ENCODE measurements at regions of chr5 and their contacts with region 1.

Region 1: DNA sequence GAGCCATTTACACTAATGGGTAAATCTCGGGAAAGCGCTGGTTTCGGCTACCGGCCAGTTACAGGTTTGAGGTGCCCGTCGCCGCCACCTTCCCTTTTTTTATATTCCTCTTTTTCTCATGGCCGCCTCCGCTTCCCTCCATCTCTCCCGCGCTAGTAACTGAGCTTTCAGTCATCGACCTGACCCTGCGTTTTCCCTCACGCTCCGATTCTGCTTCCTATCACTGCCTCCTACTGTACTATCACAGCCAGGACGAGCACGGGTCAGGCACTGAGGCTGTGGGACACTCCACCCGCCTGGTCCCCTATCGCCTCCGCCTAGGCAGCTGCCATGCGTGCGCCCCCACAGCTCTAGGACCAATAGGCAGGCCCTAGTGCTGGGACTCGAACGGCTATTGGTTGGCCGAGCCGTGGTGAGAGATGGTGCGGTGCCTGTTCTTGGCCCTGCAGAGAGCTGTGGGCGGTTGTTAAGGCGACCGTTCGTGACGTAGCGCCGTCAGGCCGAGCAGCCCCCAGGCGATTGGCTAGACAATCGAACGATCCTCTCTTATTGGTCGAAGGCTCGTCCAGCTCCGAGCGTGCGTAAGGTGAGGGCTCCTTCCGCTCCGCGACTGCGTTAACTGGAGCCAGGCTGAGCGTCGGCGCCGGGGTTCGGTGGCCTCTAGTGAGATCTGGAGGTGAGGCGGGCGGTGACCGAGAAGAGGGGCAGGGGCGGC is at the start of gene HMGCR:
- DNase-seq: peak; percentile 98 to 99
- H3K4me3 ChIP-seq: peak within 1 kb of the TSS; percentile 69 to 78
- H3K27ac ChIP-seq: peak within 1 kb of the TSS; percentile 75 to 87
- H3K4me1 ChIP-seq: peaks cover 0 to 2% of the 10 kb centered on the region in 2 donors
- H3K27me3 ChIP-seq: no peaks in the 10 kb centered on the region
- CTCF ChIP-seq: peak in 1 of 3 experiments; percentile 7
- total RNA-seq, gene HMGCR: 4.9 TPM

Region 2: DNA sequence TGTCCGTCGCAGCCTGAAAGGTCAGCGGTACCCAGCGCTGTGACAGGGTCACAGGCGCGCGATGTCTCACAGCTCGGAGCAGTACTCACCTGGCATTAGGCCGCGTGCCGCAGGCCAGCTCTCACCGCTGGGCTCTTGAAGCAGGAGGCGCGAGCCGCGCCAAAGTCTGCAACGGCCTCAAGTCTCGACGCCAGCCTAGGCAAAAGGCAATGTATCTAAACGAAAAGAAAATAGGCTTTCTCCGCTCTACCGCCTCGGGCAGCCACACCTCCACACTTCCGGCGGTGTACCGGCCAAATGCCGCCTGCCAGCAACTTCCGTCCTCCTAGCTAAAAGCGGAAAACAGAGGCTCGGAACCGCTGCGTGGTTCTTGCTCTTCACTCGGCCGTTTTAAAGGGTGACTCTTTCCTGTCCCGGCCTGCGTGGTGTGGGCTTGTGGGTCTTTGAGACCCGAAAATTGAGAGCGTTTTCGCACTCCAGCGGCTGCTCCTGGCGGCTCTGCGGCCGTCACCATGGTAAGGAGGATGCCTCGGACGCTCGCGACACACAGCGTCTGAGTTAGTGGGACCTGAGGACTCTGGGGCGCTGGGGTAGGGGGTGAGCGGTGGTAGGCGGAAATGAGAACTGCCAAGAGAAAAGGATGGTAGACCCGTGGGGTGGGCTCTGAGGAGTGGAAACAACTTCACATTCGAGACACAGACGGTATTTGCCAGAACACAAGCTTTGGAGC is 569.8 kb before region 1 on chr5 and contains the starts of genes GFM2 and NSA2:
- intact Hi-C with region 1: loop called (anchors 5 kb)
- DNase-seq: peak; percentile 50 to 94
- H3K4me3 ChIP-seq: peak within 1 kb of the TSS; percentile 88 to 96
- H3K27ac ChIP-seq: peak within 1 kb of the TSS; percentile 80 to 91
- H3K4me1 ChIP-seq: peaks cover 7 to 20% of the 10 kb centered on the region in 2 donors
- H3K27me3 ChIP-seq: no peaks in the 10 kb centered on the region
- CTCF ChIP-seq: no peak
- total RNA-seq, gene GFM2: 12.7 TPM
- total RNA-seq, gene NSA2: 103 TPM

Region 3: DNA sequence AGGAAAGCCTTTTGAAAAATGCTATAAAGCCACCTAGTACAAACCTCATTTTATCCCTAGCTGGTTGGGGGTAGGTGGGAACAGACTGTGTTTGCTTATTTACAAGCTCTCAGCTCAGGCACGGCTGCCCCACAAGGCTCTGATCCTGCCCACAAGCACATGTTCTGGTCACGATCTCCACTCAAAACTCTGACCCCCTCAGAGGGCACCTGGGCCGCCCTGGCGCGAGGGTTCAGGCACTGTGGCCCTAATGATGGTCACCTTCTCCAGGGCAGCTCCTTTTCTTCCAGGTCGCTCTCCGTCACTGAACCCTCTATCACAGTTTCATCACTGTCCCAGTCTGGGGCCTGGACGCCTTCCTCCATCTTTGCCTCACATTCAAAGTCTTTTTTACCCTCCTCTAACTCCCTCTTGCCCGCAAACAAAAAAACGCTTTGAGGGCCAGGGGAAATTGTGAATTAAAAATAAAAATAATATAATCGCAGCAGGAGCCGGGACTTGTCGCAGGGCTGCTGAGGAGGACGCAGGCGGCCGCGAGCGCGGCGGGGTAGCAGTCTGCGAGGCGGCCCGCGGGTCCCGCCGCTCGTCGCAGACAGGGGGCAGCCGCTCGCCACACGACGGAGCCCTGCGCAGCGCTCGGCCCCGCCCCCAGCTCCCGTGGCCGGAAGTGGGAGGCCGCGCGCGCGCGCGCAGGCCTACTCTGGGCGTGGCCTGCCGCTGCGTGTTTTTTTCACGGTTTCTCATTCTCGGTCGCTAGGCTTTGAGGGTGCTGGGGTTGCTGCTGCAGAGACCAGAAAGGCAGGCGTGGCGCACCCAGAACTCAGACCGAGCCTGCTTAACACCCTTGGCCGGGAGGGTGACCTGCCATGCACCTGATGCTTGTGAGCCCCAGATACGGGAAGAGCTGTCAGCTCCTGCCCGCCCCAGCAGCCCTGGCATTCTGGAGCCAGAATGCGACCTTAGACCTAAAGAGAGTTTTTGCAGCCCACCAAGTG is 100.2 kb before region 1 on chr5 and contains the start of gene ANKRD31:
- intact Hi-C with region 1: loop called (anchors 1 kb)
- DNase-seq: peak; percentile 30 to 89
- H3K4me3 ChIP-seq: peak within 1 kb of the TSS; percentile 61 to 91
- H3K27ac ChIP-seq: peak within 1 kb of the TSS; percentile 75 to 76
- H3K4me1 ChIP-seq: no peaks in the 10 kb centered on the region
- H3K27me3 ChIP-seq: no peaks in the 10 kb centered on the region
- CTCF ChIP-seq: peak; percentile 59 to 92 (median 65)
- total RNA-seq, gene ANKRD31: not detected

Region 4: DNA sequence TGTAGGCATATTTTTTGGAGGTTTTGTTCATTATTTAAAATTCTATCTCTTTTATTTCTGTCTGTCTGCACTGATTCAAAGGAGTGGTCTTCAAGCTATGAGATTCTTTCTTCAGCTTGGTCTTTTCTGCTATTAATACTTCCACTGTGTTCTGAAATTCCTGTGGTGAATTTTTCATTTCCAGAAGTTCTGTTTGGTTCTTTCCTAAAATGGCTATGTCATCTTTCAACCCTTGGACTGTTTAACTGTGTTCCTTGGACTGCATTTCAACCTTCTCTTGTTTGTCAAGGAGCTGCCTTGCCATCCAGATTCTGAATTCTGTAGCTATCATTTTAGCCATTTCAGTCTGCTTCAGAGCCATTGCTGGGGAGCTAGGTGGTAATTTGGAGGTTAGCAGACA is 98.3 kb after region 1 on chr5:
- intact Hi-C with region 1: no loop called
- DNase-seq: no peak
- H3K4me3 ChIP-seq: no peak overlapping the region
- H3K27ac ChIP-seq: no peak overlapping the region
- H3K4me1 ChIP-seq: no peaks in the 10 kb centered on the region
- H3K27me3 ChIP-seq: no peaks in the 10 kb centered on the region
- CTCF ChIP-seq: no peak

Region 5: DNA sequence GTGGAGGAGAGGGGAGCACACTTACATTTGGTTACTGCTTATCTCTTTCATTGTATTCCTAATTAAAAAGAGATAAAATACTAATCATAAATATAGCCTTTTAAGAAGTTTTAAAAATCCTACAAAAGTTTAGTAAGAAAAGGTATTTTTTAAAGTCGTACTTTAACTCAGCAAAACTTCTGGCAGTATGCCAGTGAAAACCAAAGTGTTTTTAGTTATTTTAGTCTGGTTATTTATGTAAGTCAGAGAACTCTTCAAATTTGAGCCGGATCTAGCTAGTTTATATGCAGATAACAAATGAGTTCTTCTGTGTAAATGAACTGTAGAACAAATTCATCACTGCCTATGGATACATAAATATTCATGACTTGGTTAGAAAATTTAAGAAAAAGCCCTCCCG is 238.0 kb after region 1 on chr5:
- intact Hi-C with region 1: loop called (anchors 5 kb)
- DNase-seq: no peak
- H3K4me3 ChIP-seq: peak overlapping the region in 1 of 2 donors; percentile 16
- H3K27ac ChIP-seq: peak overlapping the region; percentile 53 to 60
- H3K4me1 ChIP-seq: peaks cover 3 to 27% of the 10 kb centered on the region in 2 donors
- H3K27me3 ChIP-seq: no peaks in the 10 kb centered on the region
- CTCF ChIP-seq: no peak

Region 6: GRCh38 chr5:75717082-75717922 is 380.5 kb after region 1 on chr5 and contains the start of gene POC5:
- intact Hi-C with region 1: loop called (anchors 1 kb)
- DNase-seq: peak; percentile 87 to 98
- H3K4me3 ChIP-seq: peak within 1 kb of the TSS; percentile 64 to 77
- H3K27ac ChIP-seq: peak within 1 kb of the TSS; percentile 72 to 75
- H3K4me1 ChIP-seq: peaks cover 0 to 10% of the 10 kb centered on the region in 2 donors
- H3K27me3 ChIP-seq: no peaks in the 10 kb centered on the region
- CTCF ChIP-seq: no peak
- total RNA-seq, gene POC5: 5.3 TPM